ENCODE measurements at regions of chr2 and their contacts with region 1.

Region 1: GRCh38 chr2:25606892-25607291 is 66.5 kb downstream of the DTNB start:
- DNase-seq: no peak
- H3K4me3 ChIP-seq: no peak overlapping the region
- H3K27ac ChIP-seq: no peak overlapping the region
- H3K4me1 ChIP-seq: no peaks in the 10 kb centered on the region
- H3K27me3 ChIP-seq: no peaks in the 10 kb centered on the region
- CTCF ChIP-seq: peak; percentile 31 to 76 (median 58)
- POLR2A ChIP-seq: no peak

Region 2: DNA sequence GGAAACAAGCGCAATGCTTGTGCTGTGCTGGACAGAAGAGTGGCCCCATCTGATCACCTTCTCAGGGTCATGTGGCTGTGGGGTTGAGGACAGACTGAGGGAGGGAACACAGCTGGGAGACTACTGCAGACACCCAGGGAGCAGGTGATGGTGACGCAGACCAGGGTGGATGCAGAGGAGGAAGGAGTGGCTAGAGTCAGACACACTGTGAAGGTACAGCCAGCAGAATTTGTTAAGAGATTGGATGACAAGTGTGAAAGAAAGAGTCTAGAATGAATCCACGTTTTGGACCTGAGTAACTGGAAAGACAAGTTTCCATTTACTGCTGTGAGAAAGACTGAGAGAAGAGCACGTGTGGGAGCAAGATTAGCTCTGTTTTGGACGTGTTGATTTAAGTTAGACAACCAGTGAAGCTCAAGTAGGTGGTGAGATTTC is 422.6 kb before region 1 on chr2:
- intact Hi-C with region 1: no loop called
- DNase-seq: no peak
- H3K4me3 ChIP-seq: no peak overlapping the region
- H3K27ac ChIP-seq: peak overlapping the region; percentile 19 to 82 (median 64)
- H3K4me1 ChIP-seq: peaks cover 0 to 18% (median 3%) of the 10 kb centered on the region in 3 donors
- H3K27me3 ChIP-seq: peaks cover 0 to 4% (median 0%) of the 10 kb centered on the region in 4 donors
- CTCF ChIP-seq: no peak
- POLR2A ChIP-seq: no peak

Region 3: GRCh38 chr2:25639171-25639570 is 32.3 kb after region 1 on chr2:
- intact Hi-C with region 1: no loop called
- DNase-seq: no peak
- H3K4me3 ChIP-seq: no peak overlapping the region
- H3K27ac ChIP-seq: no peak overlapping the region
- H3K4me1 ChIP-seq: no peaks in the 10 kb centered on the region
- H3K27me3 ChIP-seq: no peaks in the 10 kb centered on the region
- CTCF ChIP-seq: no peak
- POLR2A ChIP-seq: no peak

Region 4: GRCh38 chr2:25690058-25690457 is 83.2 kb after region 1 on chr2:
- intact Hi-C with region 1: loop called (anchors 10 kb)
- DNase-seq: no peak
- H3K4me3 ChIP-seq: no peak overlapping the region
- H3K27ac ChIP-seq: no peak overlapping the region
- H3K4me1 ChIP-seq: no peaks in the 10 kb centered on the region
- H3K27me3 ChIP-seq: no peaks in the 10 kb centered on the region
- CTCF ChIP-seq: no peak
- POLR2A ChIP-seq: no peak

Measured in esophagus squamous epithelium (tissue), 5 donors.